Natural killer cell (primary cell): ENCODE measurements at regions of chr1 and their contacts with region 1.

Region 1: GRCh38 chr1:169546087-169546995 is 39.9 kb downstream of the F5 start:
- DNase-seq: peak in 1 of 2 donors; percentile 87
- ATAC-seq: peak; percentile 77 to 91 (median 91)
- H3K4me3 ChIP-seq: no peak overlapping the region
- H3K4me3 Mint-ChIP-seq: no peak overlapping the region
- H3K27ac ChIP-seq: no peak overlapping the region
- H3K27ac Mint-ChIP-seq: no peak overlapping the region
- H3K4me1 ChIP-seq: no peaks in the 10 kb centered on the region
- H3K4me1 Mint-ChIP-seq: peaks cover 0 to 5% of the 10 kb centered on the region in 2 donors
- H3K27me3 ChIP-seq: peaks cover 3% of the 10 kb centered on the region
- H3K27me3 Mint-ChIP-seq: peaks cover 13 to 22% of the 10 kb centered on the region in 2 donors
- CTCF ChIP-seq: peak; percentile 73

Region 2: GRCh38 chr1:168342572-168343280 is 1203.6 kb before region 1 on chr1:
- intact Hi-C with region 1: loop called (anchors 2 kb)
- DNase-seq: peak; percentile 82 to 97
- ATAC-seq: peak; percentile 94 to 96 (median 95)
- H3K4me3 ChIP-seq: no peak overlapping the region
- H3K4me3 Mint-ChIP-seq: peak overlapping the region; percentile 53
- H3K27ac ChIP-seq: peak overlapping the region; percentile 57
- H3K27ac Mint-ChIP-seq: peak overlapping the region; percentile 67 to 85
- H3K4me1 ChIP-seq: peaks cover 13% of the 10 kb centered on the region
- H3K4me1 Mint-ChIP-seq: peaks cover 54 to 64% of the 10 kb centered on the region in 2 donors
- H3K27me3 ChIP-seq: no peaks in the 10 kb centered on the region
- H3K27me3 Mint-ChIP-seq: no peaks in the 10 kb centered on the region
- CTCF ChIP-seq: peak; percentile 87

Region 3: GRCh38 chr1:168603501-168604110 is 942.7 kb before region 1 on chr1:
- intact Hi-C with region 1: loop called (anchors 1 kb)
- DNase-seq: peak; percentile 60 to 81
- ATAC-seq: peak; percentile 74 to 98 (median 93)
- H3K4me3 ChIP-seq: no peak overlapping the region
- H3K4me3 Mint-ChIP-seq: no peak overlapping the region
- H3K27ac ChIP-seq: no peak overlapping the region
- H3K27ac Mint-ChIP-seq: no peak overlapping the region
- H3K4me1 ChIP-seq: no peaks in the 10 kb centered on the region
- H3K4me1 Mint-ChIP-seq: peaks cover 0 to 4% of the 10 kb centered on the region in 2 donors
- H3K27me3 ChIP-seq: no peaks in the 10 kb centered on the region
- H3K27me3 Mint-ChIP-seq: peaks cover 2 to 8% of the 10 kb centered on the region in 2 donors
- CTCF ChIP-seq: peak; percentile 82

Region 4: DNA sequence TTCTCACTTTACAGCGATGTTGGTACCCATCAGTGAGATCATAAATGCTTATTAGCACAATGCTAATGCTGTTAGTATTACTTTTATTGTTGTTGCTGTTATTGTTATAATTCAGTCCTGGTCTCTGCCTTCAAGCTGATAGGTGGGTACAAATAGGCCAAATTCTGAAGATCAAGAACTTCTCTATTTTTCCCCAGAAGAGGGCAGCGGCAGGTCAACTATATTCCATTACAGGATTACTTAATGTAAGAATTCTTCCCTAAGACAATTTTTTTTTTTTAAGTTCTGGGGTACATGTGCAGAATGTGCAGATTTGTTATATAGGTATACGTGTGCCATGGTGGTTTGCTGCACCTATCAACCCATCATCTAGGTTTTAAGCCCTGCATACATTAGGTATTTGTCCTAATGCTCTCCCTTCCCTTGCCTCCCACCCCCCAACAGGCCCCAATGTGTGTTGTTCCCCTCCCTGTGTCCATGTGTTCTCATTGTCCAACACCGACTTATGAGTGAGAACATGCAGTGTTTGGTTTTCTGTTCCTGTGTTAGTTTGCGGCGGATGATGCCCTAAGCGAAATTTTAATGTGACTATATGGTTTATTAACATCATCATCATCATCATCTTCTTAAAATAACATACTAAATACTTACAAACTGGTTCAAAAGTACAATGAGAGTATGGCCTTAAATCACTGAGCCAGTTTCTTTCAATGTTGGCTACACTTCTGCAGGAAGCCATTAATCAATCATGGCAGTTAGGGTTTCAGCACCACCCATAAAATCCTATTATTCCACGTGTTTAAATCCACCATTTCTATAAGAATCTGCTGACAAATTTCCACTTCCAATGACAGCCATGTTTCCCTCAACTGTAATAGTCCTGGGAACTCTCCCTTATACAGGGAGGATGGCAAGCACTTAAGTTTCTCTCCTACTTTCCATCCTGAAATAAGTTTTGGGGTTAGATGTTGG is 79.8 kb before region 1 on chr1:
- intact Hi-C with region 1: loop called (anchors 5 kb)
- DNase-seq: peak in 1 of 2 donors; percentile 49
- ATAC-seq: no peak
- H3K4me3 ChIP-seq: no peak overlapping the region
- H3K4me3 Mint-ChIP-seq: no peak overlapping the region
- H3K27ac ChIP-seq: no peak overlapping the region
- H3K27ac Mint-ChIP-seq: no peak overlapping the region
- H3K4me1 ChIP-seq: no peaks in the 10 kb centered on the region
- H3K4me1 Mint-ChIP-seq: peaks cover 0 to under 1% of the 10 kb centered on the region in 2 donors
- H3K27me3 ChIP-seq: no peaks in the 10 kb centered on the region
- H3K27me3 Mint-ChIP-seq: no peaks in the 10 kb centered on the region
- CTCF ChIP-seq: peak; percentile 13

Region 5: DNA sequence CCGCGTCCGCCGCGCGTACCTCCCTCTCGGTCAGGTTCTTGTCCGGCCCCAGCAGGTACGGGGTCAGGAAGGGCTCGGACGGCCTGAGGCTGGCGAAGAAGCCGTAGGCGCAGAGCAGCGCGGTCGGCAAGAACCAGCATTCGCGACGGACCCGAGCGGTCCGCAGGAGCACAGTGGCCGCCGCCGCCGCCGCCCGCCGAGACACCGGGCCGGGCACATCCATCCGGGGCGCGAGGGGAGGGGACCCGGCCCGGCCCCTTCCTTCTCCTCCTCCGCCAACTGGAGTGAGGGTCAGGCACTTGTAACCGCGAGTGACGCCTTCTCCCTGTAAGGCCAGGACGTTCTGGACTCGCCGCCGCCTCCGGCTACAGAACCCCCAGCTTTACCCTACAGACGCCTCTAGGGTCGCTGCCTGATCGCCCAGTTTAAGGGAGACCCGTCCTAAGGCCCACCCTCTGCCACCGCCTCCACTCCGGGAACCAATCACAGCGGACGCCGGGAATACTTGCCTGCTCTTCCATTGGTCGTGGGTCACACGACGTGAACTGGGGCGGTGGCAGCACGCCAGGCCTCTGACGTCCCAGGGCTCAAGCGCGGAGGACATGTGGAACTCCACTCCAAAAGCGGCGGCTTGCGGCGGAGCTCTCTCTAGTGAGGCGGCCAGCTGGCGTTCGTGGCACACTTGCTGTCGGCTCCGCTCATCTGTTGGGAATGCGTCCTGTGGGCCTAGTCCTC is 60.6 kb before region 1 on chr1 and contains the start of gene SLC19A2:
- intact Hi-C with region 1: loop called (anchors 2 kb)
- DNase-seq: peak; percentile 91 to 96
- ATAC-seq: peak; percentile 96 to 100 (median 97)
- H3K4me3 ChIP-seq: peak within 1 kb of the TSS; percentile 62
- H3K4me3 Mint-ChIP-seq: peak within 1 kb of the TSS; percentile 96
- H3K27ac ChIP-seq: peak within 1 kb of the TSS; percentile 77
- H3K27ac Mint-ChIP-seq: peak within 1 kb of the TSS; percentile 90 to 92
- H3K4me1 ChIP-seq: peaks cover 7% of the 10 kb centered on the region
- H3K4me1 Mint-ChIP-seq: peaks cover 31 to 39% of the 10 kb centered on the region in 2 donors
- H3K27me3 ChIP-seq: no peaks in the 10 kb centered on the region
- H3K27me3 Mint-ChIP-seq: no peaks in the 10 kb centered on the region
- CTCF ChIP-seq: peak; percentile 31
- total RNA-seq, gene SLC19A2: 5.0 to 6.3 (median 5.3) TPM

Region 6: DNA sequence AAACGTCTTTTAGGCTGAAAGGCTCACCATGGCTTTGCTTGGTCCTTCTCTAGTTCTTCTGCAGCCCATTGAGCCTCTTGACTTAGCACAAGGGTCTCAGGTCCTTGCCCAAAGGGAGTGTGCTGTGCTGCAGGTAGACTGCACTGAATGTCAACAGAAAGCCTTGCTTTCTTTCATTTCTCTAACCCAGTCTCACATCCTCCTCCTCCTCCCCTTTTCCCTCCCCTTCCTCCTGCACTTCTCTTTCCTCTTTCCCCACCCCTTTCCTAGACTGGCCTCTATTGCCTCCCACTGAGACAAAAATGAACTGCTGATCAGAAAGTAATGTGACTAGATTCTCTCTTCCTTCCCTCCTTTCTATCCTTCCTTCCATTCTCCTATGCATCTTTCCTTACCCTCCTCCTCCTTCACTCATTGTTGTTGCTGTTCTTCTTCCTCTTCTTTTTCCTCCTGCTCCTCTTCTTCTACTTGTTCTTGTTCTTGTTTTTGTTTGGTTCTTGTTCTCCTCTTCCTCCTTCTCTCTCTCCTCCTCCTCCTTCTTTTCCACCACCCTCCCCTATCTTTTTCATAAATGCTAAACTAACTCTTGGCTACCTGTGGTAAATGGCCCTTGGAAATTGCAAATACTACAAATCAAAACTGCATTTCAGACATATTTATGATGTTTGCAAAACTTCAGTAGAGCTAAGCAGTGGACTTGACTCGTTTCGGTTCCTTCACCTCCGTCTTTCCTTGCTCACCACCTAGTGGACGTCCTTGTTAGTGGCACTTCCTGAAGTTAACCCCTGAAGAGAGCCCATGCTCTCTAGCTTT is 165.3 kb after region 1 on chr1 and contains the start of gene SELL:
- intact Hi-C with region 1: loop called (anchors 1 kb)
- DNase-seq: peak; percentile 61 to 91
- ATAC-seq: peak; percentile 89 to 93 (median 91)
- H3K4me3 ChIP-seq: peak within 1 kb of the TSS; percentile 55
- H3K4me3 Mint-ChIP-seq: peak within 1 kb of the TSS; percentile 77
- H3K27ac ChIP-seq: peak within 1 kb of the TSS; percentile 49
- H3K27ac Mint-ChIP-seq: peak within 1 kb of the TSS; percentile 27 to 90
- H3K4me1 ChIP-seq: peaks cover 4% of the 10 kb centered on the region
- H3K4me1 Mint-ChIP-seq: peaks cover 32 to 38% of the 10 kb centered on the region in 2 donors
- H3K27me3 ChIP-seq: no peaks in the 10 kb centered on the region
- H3K27me3 Mint-ChIP-seq: peaks cover 8 to 18% of the 10 kb centered on the region in 2 donors
- CTCF ChIP-seq: peak; percentile 93
- total RNA-seq, gene SELL: 149 to 190 (median 165) TPM

Region 7: GRCh38 chr1:169809370-169810095 is 263.2 kb after region 1 on chr1:
- intact Hi-C with region 1: loop called (anchors 1 kb)
- DNase-seq: peak in 1 of 2 donors; percentile 67
- ATAC-seq: peak in 2 of 3 donors; percentile 48 to 50
- H3K4me3 ChIP-seq: no peak overlapping the region
- H3K4me3 Mint-ChIP-seq: no peak overlapping the region
- H3K27ac ChIP-seq: no peak overlapping the region
- H3K27ac Mint-ChIP-seq: no peak overlapping the region
- H3K4me1 ChIP-seq: no peaks in the 10 kb centered on the region
- H3K4me1 Mint-ChIP-seq: peaks cover 4 to 9% of the 10 kb centered on the region in 2 donors
- H3K27me3 ChIP-seq: no peaks in the 10 kb centered on the region
- H3K27me3 Mint-ChIP-seq: no peaks in the 10 kb centered on the region
- CTCF ChIP-seq: peak; percentile 78